GM10248 (cell line): ENCODE measurements at regions of chr3 and their contacts with region 1.

Region 1: DNA sequence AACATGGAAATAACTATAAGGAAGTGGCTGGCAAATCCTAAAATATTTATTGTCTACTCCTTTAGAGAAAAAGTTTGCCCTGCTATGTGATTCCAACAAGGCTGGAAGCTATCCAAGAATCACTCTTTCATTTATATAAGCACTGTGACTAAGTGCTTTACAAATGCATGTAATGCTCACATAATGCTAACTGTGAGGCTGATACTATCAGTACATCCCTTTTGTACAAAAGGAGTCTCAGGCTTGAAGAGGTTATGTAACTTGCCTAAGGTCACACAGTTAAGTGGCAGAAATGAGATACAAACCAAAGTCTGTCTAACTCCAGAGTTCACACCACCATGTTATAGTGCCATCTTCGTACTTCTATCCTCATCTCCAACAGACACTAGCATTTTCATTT is 17.0 kb downstream of the TOPBP1 start:
- DNase-seq: no peak
- CTCF ChIP-seq: no peak

Region 2: DNA sequence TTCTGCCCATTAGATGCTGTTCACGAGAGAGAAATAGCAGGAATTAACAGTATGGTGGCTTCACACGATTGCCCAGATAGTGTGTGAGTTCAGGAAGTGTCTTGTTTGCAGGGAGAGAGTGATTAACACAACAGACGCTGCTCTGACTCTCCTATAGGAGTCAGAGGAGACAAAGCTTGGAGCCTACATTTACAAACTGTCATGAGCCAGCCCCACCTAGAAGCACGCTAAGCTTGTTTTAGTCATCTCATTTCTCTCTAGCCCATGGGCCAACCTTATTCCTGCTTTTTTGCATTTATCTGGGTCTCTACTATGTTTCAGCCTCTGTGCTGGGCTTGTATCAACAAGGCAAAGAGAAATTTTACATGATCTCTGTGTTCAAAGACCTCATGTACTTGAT is 373.2 kb before region 1 on chr3:
- CTCF ChIA-PET with region 1: no interaction called
- POLR2A ChIA-PET with region 1: no interaction called
- DNase-seq: no peak
- CTCF ChIP-seq: no peak

Region 3: GRCh38 chr3:133627789-133628188 is 17.0 kb before region 1 on chr3:
- CTCF ChIA-PET with region 1: interaction called, 12 read pairs
- POLR2A ChIA-PET with region 1: no interaction called
- DNase-seq: no peak
- CTCF ChIP-seq: no peak

Region 4: GRCh38 chr3:133674290-133674919 is 29.6 kb after region 1 on chr3:
- CTCF ChIA-PET with region 1: no interaction called
- POLR2A ChIA-PET with region 1: no interaction called
- DNase-seq: no peak
- CTCF ChIP-seq: no peak